Thyroid gland (tissue), 4 donors: ENCODE measurements at regions of chr1 and their contacts with region 1.

Region 1: DNA sequence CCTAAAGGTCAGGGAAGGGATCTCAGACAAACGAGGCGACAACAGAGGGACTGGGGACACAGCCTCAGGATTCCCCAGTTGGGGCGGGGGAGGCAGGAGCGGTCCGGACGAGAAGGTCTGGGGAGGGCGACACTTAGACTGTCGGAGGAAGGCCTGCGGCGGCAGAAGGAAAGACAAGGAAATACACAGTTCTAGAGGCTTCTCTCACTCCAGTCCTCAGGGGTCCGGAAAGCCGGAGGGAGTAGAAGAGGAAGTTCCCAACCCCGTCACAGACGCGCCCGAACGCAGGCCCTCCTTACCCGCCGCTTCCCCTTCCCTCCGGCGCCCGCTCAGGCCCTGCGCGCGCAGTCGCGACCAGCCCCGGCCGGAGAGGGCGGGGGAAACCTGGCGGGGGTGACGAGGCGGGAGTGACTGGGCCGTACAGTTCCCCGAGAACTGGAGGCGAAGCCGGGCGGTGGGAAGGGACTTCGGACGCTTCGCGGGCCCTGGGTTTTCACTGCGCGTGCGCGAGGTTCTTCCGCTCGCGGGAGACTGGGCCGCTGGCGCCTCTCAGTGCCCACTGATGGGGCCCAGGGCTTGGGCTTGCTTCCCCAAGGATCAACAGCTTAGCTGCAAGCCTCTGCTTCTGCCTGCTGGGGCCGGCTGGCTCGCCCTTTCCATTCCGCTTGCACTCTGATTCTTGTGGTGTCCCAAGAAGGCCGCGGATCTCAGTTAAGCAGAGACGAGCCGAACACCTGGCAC is at the start of gene IPP:
- DNase-seq: peak; percentile 98
- H3K4me3 ChIP-seq: peak within 1 kb of the TSS; percentile 10 to 62 (median 40)
- H3K27ac ChIP-seq: peak within 1 kb of the TSS; percentile 93 to 97 (median 96)
- H3K4me1 ChIP-seq: peaks cover 16 to 21% of the 10 kb centered on the region in 2 donors
- H3K27me3 ChIP-seq: no peaks in the 10 kb centered on the region
- CTCF ChIP-seq: peak in 4 of 6 experiments; percentile 17 to 72 (median 44)
- POLR2A ChIP-seq: peak; percentile 88 to 98
- total RNA-seq, gene IPP: 14.9 to 20.1 (median 17.8) TPM

Region 2: DNA sequence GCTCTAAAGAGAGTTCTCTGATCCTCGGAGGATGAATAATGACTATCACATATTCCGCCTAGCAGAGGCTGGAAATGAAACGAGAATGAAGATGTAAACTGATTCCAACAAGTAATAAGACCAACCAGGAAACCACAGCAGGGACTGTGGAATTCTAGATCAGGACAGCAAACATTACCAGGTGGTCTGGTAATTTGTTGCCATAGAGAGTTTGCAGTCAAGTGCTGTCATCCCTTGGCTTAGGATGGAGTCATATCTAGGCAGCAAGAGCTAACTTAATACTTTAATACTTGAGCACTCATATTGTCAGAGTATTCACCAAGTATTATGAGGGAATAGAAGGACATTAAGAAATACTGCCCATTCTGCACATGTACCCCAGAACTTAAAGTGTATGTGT is 365.2 kb before region 1 on chr1:
- intact Hi-C with region 1: no loop called
- DNase-seq: no peak
- H3K4me3 ChIP-seq: no peak overlapping the region
- H3K27ac ChIP-seq: no peak overlapping the region
- H3K4me1 ChIP-seq: no peaks in the 10 kb centered on the region
- H3K27me3 ChIP-seq: no peaks in the 10 kb centered on the region
- CTCF ChIP-seq: no peak
- POLR2A ChIP-seq: no peak

Region 3: DNA sequence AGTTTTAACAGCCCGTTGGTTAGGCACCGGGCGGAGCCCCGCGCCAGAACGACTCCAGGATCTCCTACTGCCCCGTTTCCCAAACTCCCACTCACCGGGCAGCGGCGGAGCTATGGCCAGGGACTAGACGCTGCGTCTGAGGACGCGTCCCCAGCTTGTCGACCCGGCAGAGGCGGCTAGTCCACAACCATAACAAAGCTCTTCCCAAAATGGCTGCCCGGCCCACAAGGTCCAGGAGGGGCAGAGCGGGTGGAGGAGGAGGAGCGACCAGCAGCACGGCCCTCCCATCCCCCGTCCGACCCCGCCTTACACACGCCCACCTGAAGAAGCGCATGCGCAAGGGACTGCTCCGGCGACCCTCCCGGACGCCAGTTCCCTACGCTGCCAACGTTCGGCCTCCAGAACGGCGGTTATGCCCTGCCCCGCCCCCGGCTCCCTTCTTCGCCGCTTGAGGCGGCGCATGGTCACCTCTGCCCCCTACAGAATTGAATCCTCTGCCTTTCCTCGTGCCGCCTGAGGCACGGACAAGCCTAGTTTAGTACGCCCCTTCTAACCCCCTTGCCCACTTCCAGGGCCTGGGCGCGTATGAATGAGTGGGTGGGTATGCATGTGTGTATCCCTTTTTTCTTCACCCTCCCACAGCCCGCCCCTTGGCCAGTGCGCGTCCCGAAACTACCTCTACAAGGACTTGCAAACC is 64.0 kb before region 1 on chr1 and contains the start of gene GPBP1L1:
- intact Hi-C with region 1: loop called (anchors 10 kb)
- DNase-seq: peak; percentile 97
- H3K4me3 ChIP-seq: peak within 1 kb of the TSS; percentile 63 to 91 (median 82)
- H3K27ac ChIP-seq: peak within 1 kb of the TSS; percentile 90 to 98 (median 94)
- H3K4me1 ChIP-seq: peaks cover 25 to 35% of the 10 kb centered on the region in 2 donors
- H3K27me3 ChIP-seq: no peaks in the 10 kb centered on the region
- CTCF ChIP-seq: no peak
- POLR2A ChIP-seq: peak; percentile 8 to 88
- total RNA-seq, gene GPBP1L1: 146 to 220 (median 176) TPM

Region 4: DNA sequence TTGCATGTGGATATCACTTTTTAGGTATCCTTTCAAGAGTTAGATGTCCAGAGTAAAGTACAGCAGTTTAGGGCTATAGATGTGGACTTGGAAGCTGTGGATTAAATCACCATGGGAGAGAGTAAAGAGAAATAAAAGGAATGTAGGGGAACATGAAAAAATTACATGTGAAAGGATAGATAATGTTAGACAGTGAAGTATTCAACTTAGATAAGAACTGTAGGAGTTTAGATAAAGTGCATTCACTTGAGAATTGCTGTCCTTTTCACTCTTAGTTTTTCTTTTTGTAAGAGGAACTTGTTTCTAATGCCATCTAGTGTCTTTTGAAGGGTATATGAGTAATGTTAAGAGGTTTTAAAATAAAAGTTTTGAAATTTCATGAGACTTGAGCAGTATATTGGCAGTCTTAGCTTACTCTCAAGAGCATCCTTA is 93.0 kb after region 1 on chr1:
- intact Hi-C with region 1: no loop called
- DNase-seq: no peak
- H3K4me3 ChIP-seq: no peak overlapping the region
- H3K27ac ChIP-seq: peak overlapping the region in 2 of 3 donors; percentile 8 to 74
- H3K4me1 ChIP-seq: peaks cover 19 to 28% of the 10 kb centered on the region in 2 donors
- H3K27me3 ChIP-seq: no peaks in the 10 kb centered on the region
- CTCF ChIP-seq: peak in 3 of 6 experiments; percentile 22 to 45 (median 42)
- POLR2A ChIP-seq: no peak